ENCODE measurements at regions of chr3 and their contacts with region 1.

Region 1: GRCh38 chr3:50321336-50322114 is 1.0 kb downstream of the HYAL2 start:
- DNase-seq: peak; percentile 90
- H3K4me3 Mint-ChIP-seq: peak overlapping the region; percentile 72
- H3K27ac Mint-ChIP-seq: peak overlapping the region; percentile 91
- H3K4me1 Mint-ChIP-seq: peaks cover 45% of the 10 kb centered on the region
- H3K27me3 Mint-ChIP-seq: no peaks in the 10 kb centered on the region

Region 2: GRCh38 chr3:50272911-50273693 is 48.4 kb before region 1 on chr3:
- CTCF ChIA-PET with region 1: interaction called, 14 read pairs
- DNase-seq: peak; percentile 91
- H3K4me3 Mint-ChIP-seq: peak overlapping the region; percentile 57
- H3K27ac Mint-ChIP-seq: peak overlapping the region; percentile 15
- H3K4me1 Mint-ChIP-seq: peaks cover 31% of the 10 kb centered on the region
- H3K27me3 Mint-ChIP-seq: peaks cover 88% of the 10 kb centered on the region

Region 3: DNA sequence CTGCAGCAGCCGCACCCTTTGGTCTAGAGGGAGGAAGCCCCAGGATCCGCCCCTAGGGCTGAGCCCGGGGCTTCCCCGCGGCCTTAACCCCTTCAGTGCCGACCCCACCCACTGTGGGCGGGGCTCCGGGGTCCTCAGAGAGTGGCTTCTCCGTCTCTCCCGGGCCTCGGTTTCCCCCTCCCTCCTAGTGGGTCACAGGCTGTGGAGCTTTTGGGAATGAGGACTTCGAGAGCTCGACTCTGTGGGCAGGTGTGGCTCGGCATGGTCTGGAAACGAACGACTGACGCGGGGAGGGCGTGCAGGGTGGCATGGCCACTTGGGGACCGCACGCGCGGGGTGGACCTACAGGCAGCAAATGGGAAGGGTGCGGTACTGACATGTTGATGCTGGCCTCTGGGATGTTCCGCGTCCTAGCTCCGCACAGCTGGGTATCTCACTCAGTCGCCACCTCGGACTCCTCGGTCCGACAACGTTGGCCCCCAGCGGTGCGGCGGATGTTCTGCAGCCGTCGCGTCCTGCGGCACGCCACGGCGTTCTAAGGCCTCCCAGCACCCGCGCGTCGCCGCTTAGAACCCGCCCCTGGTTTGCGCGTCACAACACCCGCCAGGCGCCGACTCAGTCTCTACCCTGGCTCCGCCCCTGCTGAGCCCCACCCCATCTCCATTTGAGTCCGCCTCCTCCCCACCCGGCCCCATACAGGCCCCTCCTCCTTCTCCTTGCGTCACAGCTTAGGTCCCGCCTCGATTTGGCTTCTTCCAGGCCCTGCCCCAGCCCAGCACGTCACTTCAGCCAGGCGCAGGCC is 22.5 kb before region 1 on chr3 and contains the starts of genes HYAL3 and NAA80:
- CTCF ChIA-PET with region 1: interaction called, 20 read pairs
- DNase-seq: peak; percentile 100
- H3K4me3 Mint-ChIP-seq: peak within 1 kb of the TSS; percentile 98
- H3K27ac Mint-ChIP-seq: peak within 1 kb of the TSS; percentile 99
- H3K4me1 Mint-ChIP-seq: peaks cover 40% of the 10 kb centered on the region
- H3K27me3 Mint-ChIP-seq: no peaks in the 10 kb centered on the region

Region 4: GRCh38 chr3:50304601-50305000 is 16.9 kb before region 1 on chr3:
- CTCF ChIA-PET with region 1: interaction called, 20 read pairs
- DNase-seq: no peak
- H3K4me3 Mint-ChIP-seq: no peak overlapping the region
- H3K27ac Mint-ChIP-seq: no peak overlapping the region
- H3K4me1 Mint-ChIP-seq: peaks cover 18% of the 10 kb centered on the region
- H3K27me3 Mint-ChIP-seq: no peaks in the 10 kb centered on the region

Region 5: GRCh38 chr3:50337191-50337841 is 15.8 kb after region 1 on chr3:
- CTCF ChIA-PET with region 1: interaction called, 40 read pairs
- DNase-seq: peak; percentile 98
- H3K4me3 Mint-ChIP-seq: peak overlapping the region; percentile 80
- H3K27ac Mint-ChIP-seq: peak overlapping the region; percentile 97
- H3K4me1 Mint-ChIP-seq: peaks cover 66% of the 10 kb centered on the region
- H3K27me3 Mint-ChIP-seq: no peaks in the 10 kb centered on the region

Region 6: GRCh38 chr3:50365080-50365841 is 43.7 kb after region 1 on chr3:
- CTCF ChIA-PET with region 1: no interaction called
- DNase-seq: peak; percentile 98
- H3K4me3 Mint-ChIP-seq: peak overlapping the region; percentile 78
- H3K27ac Mint-ChIP-seq: peak overlapping the region; percentile 78
- H3K4me1 Mint-ChIP-seq: peaks cover 18% of the 10 kb centered on the region
- H3K27me3 Mint-ChIP-seq: peaks cover 26% of the 10 kb centered on the region